PC-9 (cell line): ENCODE measurements at regions of chr14 and their contacts with region 1.

Region 1: GRCh38 chr14:54253195-54253947 is 143.4 kb upstream of the CDKN3 start:
- DNase-seq: peak; percentile 53 to 94
- H3K4me3 ChIP-seq: no peak overlapping the region
- H3K27ac ChIP-seq: peak overlapping the region; percentile 98
- H3K4me1 ChIP-seq: peaks cover 48% of the 10 kb centered on the region
- H3K27me3 ChIP-seq: no peaks in the 10 kb centered on the region
- CTCF ChIP-seq: no peak

Region 2: DNA sequence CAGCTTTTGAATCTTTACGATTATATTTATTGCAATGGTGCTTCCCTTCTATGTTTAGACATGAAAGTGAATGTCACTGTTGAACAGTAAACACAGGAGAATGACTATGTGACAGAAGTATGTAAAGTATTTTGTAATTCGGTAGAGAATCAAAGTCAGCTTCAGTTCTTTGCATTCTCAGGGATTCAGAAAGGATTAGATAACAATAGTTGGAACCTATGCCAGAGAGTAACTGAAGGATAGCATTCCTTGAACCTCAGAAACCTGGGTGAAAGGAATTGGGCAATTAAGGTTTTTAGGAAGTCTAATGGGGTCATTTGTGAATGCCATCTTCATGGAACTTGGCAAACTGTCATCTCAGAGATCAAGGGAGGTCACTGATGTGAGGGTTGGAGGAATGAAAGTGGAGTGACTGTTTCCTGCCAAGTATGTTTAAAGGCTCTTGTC is 795.0 kb before region 1 on chr14:
- CTCF ChIA-PET with region 1: no interaction called
- POLR2A ChIA-PET with region 1: interaction called, 5 read pairs
- intact Hi-C with region 1: loop called (anchors 10 kb)
- DNase-seq: peak; percentile 54 to 91
- H3K4me3 ChIP-seq: no peak overlapping the region
- H3K27ac ChIP-seq: peak overlapping the region; percentile 43
- H3K4me1 ChIP-seq: peaks cover 18% of the 10 kb centered on the region
- H3K27me3 ChIP-seq: no peaks in the 10 kb centered on the region
- CTCF ChIP-seq: no peak

Region 3: GRCh38 chr14:53842938-53843337 is 410.4 kb before region 1 on chr14:
- CTCF ChIA-PET with region 1: no interaction called
- POLR2A ChIA-PET with region 1: no interaction called
- intact Hi-C with region 1: loop called (anchors 1 kb)
- DNase-seq: peak; percentile 73 to 90
- H3K4me3 ChIP-seq: no peak overlapping the region
- H3K27ac ChIP-seq: peak overlapping the region; percentile 45
- H3K4me1 ChIP-seq: peaks cover 56% of the 10 kb centered on the region
- H3K27me3 ChIP-seq: no peaks in the 10 kb centered on the region
- CTCF ChIP-seq: no peak

Region 4: DNA sequence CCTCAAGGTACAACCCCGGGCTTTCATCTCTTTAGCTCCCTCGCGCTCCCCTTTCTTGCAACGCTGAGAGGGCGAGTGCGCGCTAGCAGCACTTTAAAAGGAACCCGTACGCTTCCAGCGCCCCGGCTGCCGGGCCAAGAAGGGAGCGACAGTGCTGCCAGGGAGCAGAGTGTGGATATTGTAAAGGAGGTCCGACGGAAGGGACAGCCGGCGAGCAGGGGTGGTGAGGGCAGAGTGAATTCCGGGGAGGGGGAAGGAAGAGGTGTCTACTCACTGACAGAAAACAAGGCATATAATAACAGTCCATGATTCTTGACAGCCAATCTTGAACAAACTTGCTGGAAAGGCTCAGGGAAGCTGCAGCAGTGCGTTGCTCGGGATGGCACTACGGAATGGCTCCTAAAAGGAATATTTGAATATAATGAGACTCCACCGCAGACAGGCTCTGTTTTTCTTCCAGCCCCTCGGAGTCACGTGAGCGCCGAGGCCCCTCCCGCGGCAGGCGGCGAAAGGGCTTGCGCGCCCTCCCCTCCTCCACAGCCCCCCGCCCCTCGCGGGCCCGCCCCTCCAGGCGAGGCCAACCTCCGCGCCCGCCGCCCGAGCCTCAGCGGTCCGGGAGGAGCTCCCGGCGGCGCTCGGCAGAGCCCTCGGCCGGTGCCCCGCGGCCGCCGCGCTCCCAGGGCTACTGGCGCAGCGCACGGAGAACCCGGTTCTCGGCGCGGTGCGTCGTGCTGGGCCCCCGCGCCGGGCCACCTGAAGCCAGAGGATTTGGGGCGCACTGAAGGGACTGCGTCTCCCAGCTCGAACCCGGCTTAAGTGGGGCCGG is 300.2 kb before region 1 on chr14:
- CTCF ChIA-PET with region 1: no interaction called
- POLR2A ChIA-PET with region 1: interaction called, 8 read pairs
- intact Hi-C with region 1: loop called (anchors 2 kb)
- DNase-seq: peak; percentile 40 to 80
- H3K4me3 ChIP-seq: peak overlapping the region; percentile 80
- H3K27ac ChIP-seq: peak overlapping the region; percentile 18
- H3K4me1 ChIP-seq: peaks cover 14% of the 10 kb centered on the region
- H3K27me3 ChIP-seq: no peaks in the 10 kb centered on the region
- CTCF ChIP-seq: no peak

Region 5: DNA sequence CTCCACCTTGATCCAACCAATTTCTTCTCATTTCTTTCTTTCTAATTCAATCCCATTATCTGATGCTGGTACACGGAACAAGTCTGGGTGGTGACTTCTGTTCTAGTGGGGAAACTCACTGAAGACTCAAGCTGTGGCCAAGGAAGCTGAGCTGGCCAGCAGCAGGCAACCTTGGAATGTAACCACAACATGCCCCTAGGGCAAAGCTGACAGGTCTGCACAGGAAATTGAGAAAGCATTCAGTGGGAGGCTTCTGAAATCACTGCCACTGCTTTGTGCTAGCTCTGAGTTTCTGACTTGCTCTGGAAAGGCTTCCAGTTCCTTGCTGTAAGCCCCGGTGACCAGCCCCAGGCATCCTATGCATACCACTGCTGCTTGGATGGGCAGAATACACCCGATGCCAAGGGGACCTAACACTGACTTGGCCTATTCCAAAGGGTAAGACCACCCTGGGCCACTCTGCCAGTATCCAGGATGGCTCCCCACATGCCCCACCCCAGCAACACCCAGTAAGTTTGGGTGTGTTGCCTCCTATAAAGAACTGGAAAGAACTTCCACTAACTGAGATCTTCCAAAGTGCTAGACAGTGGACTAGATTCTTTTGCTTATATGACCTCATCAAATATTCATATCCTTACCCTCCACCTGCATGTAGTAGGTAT is 58.9 kb after region 1 on chr14:
- CTCF ChIA-PET with region 1: interaction called, 8 read pairs
- POLR2A ChIA-PET with region 1: no interaction called
- intact Hi-C with region 1: loop called (anchors 1 kb)
- DNase-seq: peak; percentile 91 to 97
- H3K4me3 ChIP-seq: no peak overlapping the region; the same call in 1 of the 2 replicates
- H3K27ac ChIP-seq: peak overlapping the region; percentile 75
- H3K4me1 ChIP-seq: peaks cover 35% of the 10 kb centered on the region
- H3K27me3 ChIP-seq: no peaks in the 10 kb centered on the region
- CTCF ChIP-seq: no peak

Region 6: GRCh38 chr14:54338696-54339317 is 85.4 kb after region 1 on chr14:
- CTCF ChIA-PET with region 1: interaction called, 9 read pairs
- POLR2A ChIA-PET with region 1: no interaction called
- intact Hi-C with region 1: loop called (anchors 1 kb)
- DNase-seq: peak; percentile 39 to 57
- H3K4me3 ChIP-seq: no peak overlapping the region
- H3K27ac ChIP-seq: no peak overlapping the region
- H3K4me1 ChIP-seq: peaks cover 13% of the 10 kb centered on the region
- H3K27me3 ChIP-seq: no peaks in the 10 kb centered on the region
- CTCF ChIP-seq: peak; percentile 73